ENCODE measurements at regions of chr20 and their contacts with region 1.

Region 1: GRCh38 chr20:11204926-11205768 is 531.3 kb upstream of the JAG1 start:
- DNase-seq: peak; percentile 5
- H3K4me3 ChIP-seq: no peak overlapping the region; a peak in 1 of 4 replicates
- H3K27ac ChIP-seq: peak overlapping the region; percentile 19 to 94
- H3K4me1 ChIP-seq: peaks cover 3 to 17% of the 10 kb centered on the region in 2 experiments
- H3K27me3 ChIP-seq: no peaks in the 10 kb centered on the region
- CTCF ChIP-seq: peak; percentile 89
- EP300 ChIP-seq: no peak
- RAD21 ChIP-seq: peak; percentile 72

Region 2: DNA sequence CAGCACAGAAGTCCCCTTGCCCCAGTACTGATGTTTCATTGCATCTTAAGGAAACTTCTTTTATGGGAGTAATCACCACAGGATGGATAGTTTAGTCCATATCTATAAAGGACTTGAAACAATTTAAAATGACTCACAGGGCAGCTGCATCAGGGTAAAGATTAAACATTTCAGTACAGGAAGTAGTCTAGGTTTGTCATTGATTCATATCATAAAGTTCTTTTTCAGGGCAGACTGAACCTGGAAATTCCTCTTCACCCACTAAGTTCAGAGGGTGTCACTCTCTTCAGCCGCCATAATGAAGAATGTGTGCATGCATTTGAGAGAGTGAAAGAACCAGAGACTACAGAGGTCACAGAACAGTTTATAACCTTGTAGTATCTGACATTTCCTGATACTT is 235.0 kb before region 1 on chr20:
- CTCF ChIA-PET with region 1: no interaction called
- POLR2A ChIA-PET with region 1: no interaction called
- DNase-seq: no peak
- H3K4me3 ChIP-seq: no peak overlapping the region
- H3K27ac ChIP-seq: peak overlapping the region in 1 of 2 experiments; percentile 35; a peak in 1 of 4 replicates
- H3K4me1 ChIP-seq: no peaks in the 10 kb centered on the region
- H3K27me3 ChIP-seq: no peaks in the 10 kb centered on the region
- CTCF ChIP-seq: no peak
- EP300 ChIP-seq: no peak
- RAD21 ChIP-seq: no peak

Region 3: GRCh38 chr20:11216451-11217314 is 11.5 kb after region 1 on chr20:
- CTCF ChIA-PET with region 1: interaction called, 14 read pairs
- POLR2A ChIA-PET with region 1: no interaction called
- DNase-seq: no peak
- H3K4me3 ChIP-seq: no peak overlapping the region
- H3K27ac ChIP-seq: peak overlapping the region; percentile 65 to 81
- H3K4me1 ChIP-seq: peaks cover 4 to 16% of the 10 kb centered on the region in 2 experiments; a peak in 3 of 4 replicates
- H3K27me3 ChIP-seq: no peaks in the 10 kb centered on the region
- CTCF ChIP-seq: no peak
- EP300 ChIP-seq: peak in 1 of 2 experiments; percentile 48; a peak in 1 of 4 replicates
- RAD21 ChIP-seq: no peak

Region 4: GRCh38 chr20:11248687-11249194 is 43.6 kb after region 1 on chr20:
- CTCF ChIA-PET with region 1: no interaction called
- POLR2A ChIA-PET with region 1: no interaction called
- DNase-seq: no peak
- H3K4me3 ChIP-seq: no peak overlapping the region
- H3K27ac ChIP-seq: no peak overlapping the region
- H3K4me1 ChIP-seq: no peaks in the 10 kb centered on the region
- H3K27me3 ChIP-seq: no peaks in the 10 kb centered on the region
- CTCF ChIP-seq: no peak
- EP300 ChIP-seq: no peak
- RAD21 ChIP-seq: no peak